ENCODE measurements at regions of chr15 and their contacts with region 1.

Region 1: DNA sequence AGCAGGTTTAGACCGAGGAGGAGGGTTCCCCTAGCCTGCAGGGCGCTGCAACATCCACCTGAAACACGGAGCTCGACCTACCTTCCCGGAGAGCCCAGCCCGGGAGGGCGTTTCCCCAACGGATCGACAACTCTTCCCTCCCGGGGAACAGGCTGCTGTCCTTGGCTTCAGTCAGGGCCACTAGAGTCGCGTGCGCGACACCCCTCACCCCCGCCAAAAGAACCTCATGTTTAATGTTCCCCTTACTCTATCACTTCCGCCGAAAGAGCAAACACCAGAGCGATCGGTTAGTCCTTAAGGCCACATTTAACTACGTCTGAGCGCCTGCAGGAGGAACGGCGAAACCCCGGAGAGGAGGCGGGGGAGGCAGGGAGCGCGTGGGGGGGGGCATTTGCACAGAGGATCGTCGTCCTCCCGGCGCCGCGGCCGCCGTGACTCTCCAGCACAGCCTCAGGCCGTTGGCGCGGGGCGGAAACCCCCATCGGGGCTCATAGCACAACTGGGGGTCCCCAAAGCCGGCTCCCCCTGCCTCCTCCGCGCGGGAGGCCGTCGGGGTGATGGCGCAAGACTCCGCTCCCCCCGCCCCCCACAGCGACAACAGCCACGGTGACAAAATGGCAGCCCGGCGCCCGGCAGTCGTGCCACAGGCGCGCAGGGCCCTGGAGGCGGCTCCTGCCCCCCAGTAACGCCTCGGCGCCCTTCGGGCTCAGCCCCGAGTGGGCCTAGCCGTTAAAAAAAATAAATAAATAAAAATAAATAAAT is 3.2 kb downstream of the ANP32A start:
- DNase-seq: peak; percentile 75

Region 2: GRCh38 chr15:68492855-68493254 is 324.6 kb before region 1 on chr15:
- in situ Hi-C with region 1: no loop called
- DNase-seq: peak; percentile 23

Region 3: DNA sequence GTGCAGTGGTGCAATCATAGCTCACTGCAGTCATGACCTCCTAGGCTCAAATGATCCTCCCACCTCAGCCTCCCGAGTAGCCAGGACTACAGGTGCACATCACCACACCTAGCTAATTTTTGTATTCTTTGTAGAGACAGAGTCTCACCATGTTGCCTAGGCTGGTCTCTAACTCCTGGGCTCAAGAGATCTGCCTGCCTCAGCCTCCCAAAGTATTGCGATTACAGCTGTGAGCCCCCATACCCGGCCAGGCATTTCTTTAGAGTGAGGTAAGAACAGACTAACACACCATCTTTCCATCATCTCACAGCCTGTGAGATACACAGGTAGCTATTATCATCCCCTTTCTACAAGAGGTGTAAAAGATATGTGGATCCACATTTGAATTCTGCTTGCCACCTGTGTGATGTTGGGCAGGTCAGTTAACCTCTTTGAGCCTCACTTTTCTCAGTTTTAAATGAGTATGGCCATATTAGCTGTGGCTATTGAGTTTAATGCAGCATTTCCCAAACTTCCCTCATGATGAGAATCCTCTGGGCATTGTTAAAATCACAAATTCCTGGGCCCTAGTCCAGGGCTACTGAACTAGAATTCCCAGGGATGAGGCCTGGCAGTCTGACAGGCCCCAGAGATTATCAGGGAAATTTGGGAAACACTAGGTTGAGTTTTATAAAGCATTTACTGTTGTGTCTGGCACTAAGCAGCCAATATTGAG is 42.8 kb before region 1 on chr15:
- in situ Hi-C with region 1: loop called (anchors 5 kb)
- DNase-seq: no peak